Gastrocnemius medialis (tissue), 4 donors: ENCODE measurements at regions of chr15 and their contacts with region 1.

Region 1: GRCh38 chr15:74489518-74490338 is 28.8 kb upstream of the UBL7 start:
- DNase-seq: peak; percentile 8 to 32
- ATAC-seq: peak; percentile 47 to 90
- H3K4me3 ChIP-seq: no peak overlapping the region
- H3K27ac ChIP-seq: no peak overlapping the region
- H3K4me1 ChIP-seq: no peaks in the 10 kb centered on the region
- H3K27me3 ChIP-seq: no peaks in the 10 kb centered on the region
- CTCF ChIP-seq: peak; percentile 18 to 78 (median 61)
- POLR2A ChIP-seq: no peak

Region 2: DNA sequence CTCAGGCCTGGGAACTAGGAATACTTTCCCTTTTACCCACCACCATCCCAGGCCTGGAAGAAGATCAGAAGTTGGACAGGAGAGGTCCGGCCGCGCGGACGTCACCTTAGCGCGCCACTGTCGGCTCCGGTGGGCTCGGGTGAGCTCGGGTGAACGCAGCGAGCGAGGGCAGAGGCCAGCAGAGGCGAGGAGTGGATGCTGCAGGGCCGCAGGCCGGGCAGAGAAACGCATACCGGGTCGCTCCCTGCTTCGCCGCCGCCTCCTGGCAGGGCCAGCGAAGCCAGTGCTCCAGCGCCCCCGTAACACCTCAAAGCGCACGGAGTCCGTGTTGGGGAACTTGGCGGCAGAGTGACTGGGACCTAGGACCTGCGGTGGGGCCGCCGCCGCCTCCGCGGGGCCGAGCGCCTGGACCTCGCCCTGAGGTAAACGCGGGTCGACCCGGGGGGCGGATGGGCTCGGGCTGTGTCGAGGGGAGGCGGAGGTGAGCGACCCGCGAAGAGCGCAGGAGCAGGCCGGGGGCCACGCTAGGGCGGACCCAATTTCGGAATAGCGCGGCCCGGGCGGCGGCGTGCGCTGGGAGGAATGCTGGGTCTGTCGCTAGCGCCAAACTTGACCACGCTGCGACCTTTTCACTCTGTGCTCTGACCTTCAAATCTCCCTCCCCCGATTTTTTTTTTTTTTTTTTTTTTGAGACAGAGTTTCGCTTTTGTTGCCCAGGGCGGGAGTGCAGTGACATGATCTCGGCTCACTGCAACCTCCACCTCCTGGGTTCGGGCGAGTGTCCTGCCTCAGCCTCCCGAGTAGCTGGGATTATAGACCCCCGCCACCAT is 123.9 kb before region 1 on chr15:
- in situ Hi-C with region 1: loop called in 1 of 4 experiments (anchors 10 kb)
- intact Hi-C with region 1: no loop called
- DNase-seq: peak in 1 of 2 donors; percentile 60
- ATAC-seq: peak; percentile 82 to 83
- H3K4me3 ChIP-seq: peak overlapping the region; percentile 60 to 91 (median 64)
- H3K27ac ChIP-seq: peak overlapping the region; percentile 26 to 66 (median 56)
- H3K4me1 ChIP-seq: peaks cover 5 to 6% of the 10 kb centered on the region in 2 donors
- H3K27me3 ChIP-seq: no peaks in the 10 kb centered on the region
- CTCF ChIP-seq: no peak
- POLR2A ChIP-seq: no peak

Region 3: DNA sequence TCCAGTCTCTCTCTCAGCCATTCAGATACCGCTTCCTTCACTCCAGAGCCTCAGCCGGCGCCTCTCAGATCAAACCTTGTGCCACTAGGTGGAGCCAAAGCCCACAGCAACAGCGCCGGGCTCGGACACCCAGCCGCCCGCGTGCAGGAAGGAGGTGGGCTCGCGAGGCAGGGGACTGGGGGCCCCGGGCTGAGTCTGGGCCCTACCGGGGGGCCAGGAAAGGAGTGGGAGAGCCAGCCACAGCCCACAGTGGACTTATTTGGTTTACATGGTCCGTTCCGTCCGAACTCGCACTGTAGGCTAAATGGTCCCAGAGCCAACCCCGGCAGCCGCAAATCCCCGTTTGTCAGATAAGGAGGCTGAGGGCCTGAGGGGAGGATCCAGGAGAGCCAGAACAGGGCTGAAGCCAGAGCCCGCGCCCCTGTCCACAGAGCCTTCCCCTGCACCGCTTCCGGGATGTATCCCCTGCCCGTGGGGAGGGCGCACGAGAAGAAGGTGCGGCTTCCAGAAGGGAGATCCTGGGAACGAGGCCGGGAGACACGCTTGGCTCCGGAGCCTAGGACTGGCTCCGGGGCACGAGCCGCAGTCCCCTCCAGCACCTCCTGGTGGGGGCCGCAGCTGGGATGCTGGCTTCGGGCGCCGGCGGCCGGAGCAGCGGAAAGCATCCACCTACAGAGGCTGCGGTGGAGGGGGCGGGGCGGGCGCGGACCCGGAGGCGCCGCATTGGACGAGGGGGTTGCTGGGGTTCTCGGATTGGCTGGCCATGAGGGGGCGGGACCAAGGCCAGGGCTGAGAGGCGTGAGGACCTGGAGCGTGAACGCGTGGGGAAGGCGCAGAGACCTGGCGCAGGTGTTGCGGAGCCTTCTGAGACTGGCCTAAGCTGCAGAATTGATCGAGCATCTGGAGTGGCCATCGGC is 115.7 kb before region 1 on chr15:
- in situ Hi-C with region 1: loop called in 2 of 4 experiments (anchors 5 to 10 kb)
- intact Hi-C with region 1: loop called (anchors 1 kb)
- DNase-seq: peak; percentile 83 to 91
- ATAC-seq: peak; percentile 92 to 93
- H3K4me3 ChIP-seq: peak overlapping the region; percentile 63 to 90 (median 72)
- H3K27ac ChIP-seq: no peak overlapping the region
- H3K4me1 ChIP-seq: peaks cover 10 to 15% of the 10 kb centered on the region in 2 donors
- H3K27me3 ChIP-seq: no peaks in the 10 kb centered on the region
- CTCF ChIP-seq: peak; percentile 59 to 92 (median 87)
- POLR2A ChIP-seq: no peak

Region 4: DNA sequence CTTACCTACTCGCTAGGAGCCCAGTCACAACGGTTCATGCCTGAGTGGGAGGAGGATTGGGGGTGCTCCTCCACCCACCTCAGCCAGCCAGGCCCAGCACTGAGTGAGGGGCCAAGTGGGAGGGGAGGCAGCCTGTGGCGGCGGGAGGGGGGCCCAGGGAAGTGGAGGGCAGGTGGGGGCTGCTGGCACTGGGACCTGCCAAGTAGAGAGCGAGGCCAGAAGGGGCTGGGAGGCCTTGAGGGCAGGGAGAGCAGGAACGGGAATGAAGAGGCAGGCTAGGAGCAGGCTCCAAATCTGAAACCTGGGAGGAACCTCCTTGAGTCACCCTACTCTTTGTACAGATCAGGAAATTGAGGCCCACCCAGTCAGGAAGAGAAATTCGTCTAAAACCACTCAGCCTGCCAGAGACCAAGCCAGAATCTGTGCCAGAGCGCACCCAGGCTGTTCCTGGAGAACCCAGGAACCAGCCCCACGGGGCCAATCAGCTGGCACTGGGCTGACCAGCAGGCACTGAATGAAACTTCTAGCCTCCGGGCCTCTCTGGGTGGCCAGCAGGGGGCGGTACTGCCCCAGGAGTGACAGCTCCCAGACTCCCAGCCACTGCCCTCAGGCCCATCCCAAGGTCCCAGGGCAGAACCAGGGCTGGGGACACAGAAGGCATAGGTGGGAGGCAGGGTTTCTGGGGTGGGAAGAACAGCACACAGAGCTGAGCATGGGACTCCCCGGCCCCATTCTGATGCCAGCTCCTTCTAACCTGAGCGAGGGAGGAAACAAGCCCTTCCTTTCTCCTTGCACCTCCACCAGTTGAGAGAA is 107.5 kb before region 1 on chr15:
- in situ Hi-C with region 1: loop called (anchors 5 kb)
- intact Hi-C with region 1: loop called (anchors 2 kb)
- DNase-seq: peak; percentile 59 to 79
- ATAC-seq: peak; percentile 80 to 92
- H3K4me3 ChIP-seq: no peak overlapping the region
- H3K27ac ChIP-seq: no peak overlapping the region
- H3K4me1 ChIP-seq: peaks cover 12 to 13% of the 10 kb centered on the region in 2 donors
- H3K27me3 ChIP-seq: no peaks in the 10 kb centered on the region
- CTCF ChIP-seq: peak; percentile 88 to 96 (median 94)
- POLR2A ChIP-seq: no peak

Region 5: GRCh38 chr15:74438721-74439316 is 50.9 kb before region 1 on chr15:
- in situ Hi-C with region 1: loop called in 1 of 4 experiments (anchors 5 kb)
- intact Hi-C with region 1: loop called (anchors 5 kb)
- DNase-seq: peak; percentile 41 to 64
- ATAC-seq: peak; percentile 40 to 73
- H3K4me3 ChIP-seq: no peak overlapping the region
- H3K27ac ChIP-seq: no peak overlapping the region
- H3K4me1 ChIP-seq: peaks cover 12 to 23% of the 10 kb centered on the region in 2 donors
- H3K27me3 ChIP-seq: no peaks in the 10 kb centered on the region
- CTCF ChIP-seq: peak; percentile 76 to 91 (median 84)
- POLR2A ChIP-seq: no peak